ENCODE measurements at regions of chr9 and their contacts with region 1.

Region 1: GRCh38 chr9:114366334-114367128 is 21.3 kb downstream of the AKNA start:
- DNase-seq: peak in 7 of 9 donors; percentile 40 to 69 (median 64)
- ATAC-seq: peak; percentile 60
- H3K4me3 ChIP-seq: peak overlapping the region; percentile 17
- H3K4me3 Mint-ChIP-seq: peak overlapping the region; percentile 62 to 98 (median 76)
- H3K27ac ChIP-seq: peak overlapping the region; percentile 69
- H3K27ac Mint-ChIP-seq: peak overlapping the region; percentile 70 to 98 (median 93)
- H3K4me1 ChIP-seq: peaks cover 89 to 94% of the 10 kb centered on the region in 2 donors
- H3K4me1 Mint-ChIP-seq: peaks cover 65 to 99% (median 80%) of the 10 kb centered on the region in 7 donors
- H3K27me3 ChIP-seq: no peaks in the 10 kb centered on the region
- H3K27me3 Mint-ChIP-seq: no peaks in the 10 kb centered on the region

Region 2: GRCh38 chr9:113929634-113930389 is 436.7 kb before region 1 on chr9:
- CTCF ChIA-PET with region 1: no interaction called
- POLR2A ChIA-PET with region 1: no interaction called
- intact Hi-C with region 1: no loop called
- DNase-seq: no peak
- ATAC-seq: no peak
- H3K4me3 ChIP-seq: no peak overlapping the region
- H3K4me3 Mint-ChIP-seq: no peak overlapping the region
- H3K27ac ChIP-seq: no peak overlapping the region
- H3K27ac Mint-ChIP-seq: no peak overlapping the region
- H3K4me1 ChIP-seq: no peaks in the 10 kb centered on the region
- H3K4me1 Mint-ChIP-seq: no peaks in the 10 kb centered on the region
- H3K27me3 ChIP-seq: no peaks in the 10 kb centered on the region
- H3K27me3 Mint-ChIP-seq: peaks cover 0 to 12% (median 0%) of the 10 kb centered on the region in 5 donors

Region 3: GRCh38 chr9:114348906-114349482 is 17.5 kb before region 1 on chr9:
- CTCF ChIA-PET with region 1: interaction called, 3 read pairs
- POLR2A ChIA-PET with region 1: interaction called, 26 read pairs
- intact Hi-C with region 1: loop called (anchors 1 to 2 kb)
- DNase-seq: peak in 3 of 9 donors; percentile 18 to 83 (median 62)
- ATAC-seq: peak; percentile 85
- H3K4me3 ChIP-seq: no peak overlapping the region
- H3K4me3 Mint-ChIP-seq: peak overlapping the region in 8 of 10 donors; percentile 29 to 65 (median 50)
- H3K27ac ChIP-seq: peak overlapping the region; percentile 70
- H3K27ac Mint-ChIP-seq: peak overlapping the region; percentile 79 to 98 (median 90)
- H3K4me1 ChIP-seq: peaks cover 22 to 24% of the 10 kb centered on the region in 2 donors
- H3K4me1 Mint-ChIP-seq: peaks cover 23 to 60% (median 43%) of the 10 kb centered on the region in 7 donors
- H3K27me3 ChIP-seq: no peaks in the 10 kb centered on the region
- H3K27me3 Mint-ChIP-seq: no peaks in the 10 kb centered on the region

Measured in naive thymus-derived CD4-positive, alpha-beta T cell (primary cell).